AG04449 (cell line): ENCODE measurements at regions of chr1 and their contacts with region 1.

Region 1: DNA sequence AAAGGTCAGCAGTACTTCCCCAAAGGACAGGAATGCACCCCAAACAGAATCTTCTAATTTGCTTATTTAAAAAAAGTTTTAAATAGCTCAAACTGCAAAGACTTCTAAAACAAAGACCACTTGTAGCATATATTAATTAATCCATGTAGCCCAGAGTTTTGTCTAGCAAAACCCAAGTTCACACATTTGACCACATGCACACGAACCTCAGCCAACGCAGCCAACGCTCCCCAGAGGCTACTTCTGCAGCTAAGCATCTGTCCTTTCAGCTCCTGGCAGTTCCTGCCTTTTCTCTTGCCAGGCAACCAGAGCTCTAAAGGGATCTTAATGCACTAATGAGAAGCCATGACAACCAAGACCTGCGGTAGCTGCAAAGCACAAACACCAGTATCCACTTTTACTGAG is 89.6 kb downstream of the RERE start:
- DNase-seq: no peak
- H3K4me3 ChIP-seq: no peak overlapping the region
- CTCF ChIP-seq: no peak

Region 2: DNA sequence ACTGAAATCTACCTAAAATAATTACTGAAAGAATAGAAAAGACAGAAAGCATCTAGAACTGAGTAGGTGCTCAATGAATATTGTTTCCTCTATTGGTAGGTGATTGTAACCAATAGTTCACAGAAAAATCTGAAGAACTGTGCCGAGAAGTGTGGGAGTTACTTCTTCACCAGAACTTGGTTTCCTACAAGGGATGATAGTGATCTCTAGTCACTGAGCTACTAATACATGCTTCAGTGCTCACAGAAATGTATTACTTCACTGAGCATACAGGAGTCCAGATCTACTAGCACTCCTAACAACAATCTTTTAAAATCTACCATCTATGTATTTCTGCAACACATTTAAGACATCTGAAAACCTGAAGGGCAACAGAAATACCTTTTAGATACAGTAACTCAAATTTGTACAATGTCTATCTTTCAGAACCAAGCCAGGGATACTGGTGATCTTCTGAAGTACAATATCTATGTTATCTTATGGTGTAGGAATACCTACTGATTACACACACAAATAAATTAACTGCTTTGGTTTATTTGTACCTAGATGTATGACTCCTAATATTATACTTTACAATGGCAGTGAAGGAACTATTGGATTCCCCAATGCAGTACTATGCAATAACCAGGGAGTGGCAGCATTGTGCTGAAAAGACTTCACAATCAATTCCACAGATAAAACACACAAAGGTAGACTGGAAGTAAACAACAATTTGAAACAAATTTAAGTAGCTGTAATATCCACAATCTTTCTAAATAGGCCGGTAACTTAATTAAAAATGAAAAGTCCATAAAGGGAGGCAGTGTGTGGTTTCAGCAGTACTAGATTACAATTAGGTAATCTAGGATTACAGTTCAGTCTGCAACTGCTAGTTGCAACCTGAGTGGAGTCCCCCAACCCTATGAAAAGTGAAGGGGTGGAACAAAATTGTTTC is 166.9 kb before region 1 on chr1:
- CTCF ChIA-PET with region 1: interaction called, 233 read pairs
- POLR2A ChIA-PET with region 1: no interaction called
- DNase-seq: no peak
- H3K4me3 ChIP-seq: no peak overlapping the region
- CTCF ChIP-seq: peak; percentile 71

Region 3: GRCh38 chr1:8580566-8580965 is 147.2 kb before region 1 on chr1:
- CTCF ChIA-PET with region 1: interaction called, 21 read pairs
- POLR2A ChIA-PET with region 1: no interaction called
- DNase-seq: no peak
- H3K4me3 ChIP-seq: no peak overlapping the region
- CTCF ChIP-seq: no peak

Region 4: GRCh38 chr1:8702850-8703810 is 24.7 kb before region 1 on chr1:
- CTCF ChIA-PET with region 1: interaction called, 21 read pairs
- POLR2A ChIA-PET with region 1: interaction called, 3 read pairs
- DNase-seq: no peak
- H3K4me3 ChIP-seq: peak overlapping the region; percentile 59
- CTCF ChIP-seq: peak; percentile 24

Region 5: GRCh38 chr1:8740034-8740449 is 12.2 kb after region 1 on chr1:
- CTCF ChIA-PET with region 1: interaction called, 161 read pairs
- POLR2A ChIA-PET with region 1: no interaction called
- DNase-seq: peak; percentile 36
- H3K4me3 ChIP-seq: no peak overlapping the region
- CTCF ChIP-seq: no peak

Region 6: DNA sequence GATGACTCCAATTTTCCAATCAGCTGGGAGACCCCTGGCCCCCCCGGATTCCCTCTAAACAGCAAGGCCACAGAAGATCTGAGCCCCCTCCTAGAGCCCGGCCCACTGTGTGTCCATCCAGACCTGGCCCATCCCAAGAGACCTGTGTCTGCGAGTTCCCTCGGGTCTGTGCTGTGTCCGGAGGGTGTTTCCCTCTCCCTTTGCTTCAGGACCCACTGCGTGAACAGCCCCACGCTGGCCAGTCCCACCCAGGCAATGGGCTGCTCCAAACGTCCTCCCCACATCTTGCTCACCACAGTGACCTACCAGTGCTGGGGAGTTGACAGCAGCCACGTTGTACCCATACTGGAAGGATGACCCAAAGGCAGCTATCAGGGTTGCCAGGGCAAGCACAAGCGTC is 330.0 kb after region 1 on chr1:
- CTCF ChIA-PET with region 1: no interaction called
- POLR2A ChIA-PET with region 1: no interaction called
- DNase-seq: no peak
- H3K4me3 ChIP-seq: no peak overlapping the region
- CTCF ChIP-seq: no peak